Sciatic nerve (tissue), 2 donors: ENCODE measurements at regions of chr21 and their contacts with region 1.

Region 1: GRCh38 chr21:45554477-45555175 is 12.4 kb upstream of the SLC19A1 start:
- DNase-seq: peak; percentile 93
- ATAC-seq: peak; percentile 81

Region 2: GRCh38 chr21:45596704-45597318 is 42.2 kb after region 1 on chr21:
- intact Hi-C with region 1: loop called (anchors 5 kb)
- DNase-seq: peak; percentile 87
- ATAC-seq: peak; percentile 84

Region 3: GRCh38 chr21:45634511-45635183 is 80.0 kb after region 1 on chr21:
- intact Hi-C with region 1: loop called (anchors 5 kb)
- DNase-seq: no peak
- ATAC-seq: peak; percentile 27

Region 4: DNA sequence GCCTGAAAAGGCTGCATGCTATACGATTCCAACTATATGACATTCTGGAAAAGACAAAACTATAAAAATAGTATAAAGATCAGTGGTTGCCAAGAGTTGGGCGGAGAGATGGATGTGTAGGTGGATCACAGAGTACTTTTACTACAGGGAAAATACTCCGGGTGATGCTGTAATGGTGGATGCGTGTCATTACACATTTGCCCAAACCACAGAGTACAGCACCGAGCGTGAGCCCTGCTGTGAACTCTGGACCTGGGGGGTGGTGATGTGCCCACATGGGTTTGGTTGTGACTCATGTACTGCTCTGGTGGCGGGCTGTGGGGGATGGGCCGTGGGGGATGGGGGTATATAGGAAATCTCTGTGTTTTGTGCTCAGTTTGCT is 264.3 kb after region 1 on chr21:
- intact Hi-C with region 1: loop called (anchors 5 kb)
- DNase-seq: no peak
- ATAC-seq: no peak